ENCODE measurements at regions of chr20 and their contacts with region 1.

Region 1: GRCh38 chr20:24382743-24383142 is 86.7 kb upstream of the SYNDIG1 start:
- DNase-seq: peak in 4 of 10 donors; percentile 12 to 68 (median 44)
- H3K4me3 ChIP-seq: peak overlapping the region in 1 of 59 donors; percentile 9
- H3K27ac ChIP-seq: peak overlapping the region in 48 of 59 donors; percentile 2 to 83 (median 56)
- H3K27me3 ChIP-seq: peaks cover 0 to 4% (median 0%) of the 10 kb centered on the region in 45 donors
- CTCF ChIP-seq: no peak

Region 2: GRCh38 chr20:24309596-24309995 is 73.1 kb before region 1 on chr20:
- intact Hi-C with region 1: loop called in 1 of 2 experiments (anchors 5 kb)
- DNase-seq: no peak
- H3K4me3 ChIP-seq: no peak overlapping the region
- H3K27ac ChIP-seq: no peak overlapping the region
- H3K27me3 ChIP-seq: peaks cover 0 to 6% (median 0%) of the 10 kb centered on the region in 45 donors
- CTCF ChIP-seq: no peak

Region 3: DNA sequence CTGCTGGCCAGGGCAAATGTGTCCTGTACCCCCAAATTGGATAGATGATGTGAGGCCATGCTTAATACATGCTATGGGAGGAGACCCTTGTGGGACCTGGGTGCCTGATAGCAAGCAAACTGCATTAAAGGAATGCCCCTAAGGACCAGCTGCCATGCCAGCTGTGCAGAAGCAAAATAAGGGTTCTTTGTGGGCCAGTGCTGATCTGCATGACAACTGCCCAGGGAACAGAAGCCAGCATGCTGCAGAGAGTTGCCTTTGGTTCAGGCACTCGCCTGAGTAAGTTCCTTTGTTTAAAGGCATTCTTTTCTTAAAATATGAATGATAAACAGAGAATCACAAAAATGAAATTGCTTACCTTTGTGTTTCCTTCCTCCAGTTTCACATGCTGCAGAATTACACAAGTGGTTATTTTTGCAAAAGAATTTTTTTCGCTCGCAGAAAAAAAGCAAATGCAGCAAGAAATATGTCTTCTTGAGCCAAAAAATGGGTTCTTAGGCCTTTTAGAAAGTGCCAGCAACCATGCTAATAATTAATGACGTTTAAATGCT is 79.8 kb after region 1 on chr20:
- intact Hi-C with region 1: loop called in 1 of 2 experiments (anchors 5 kb)
- DNase-seq: peak in 9 of 10 donors; percentile 51 to 84 (median 74)
- H3K4me3 ChIP-seq: peak overlapping the region in 2 of 59 donors; percentile 15 to 21
- H3K27ac ChIP-seq: peak overlapping the region; percentile 70 to 99 (median 91)
- H3K27me3 ChIP-seq: peaks cover 0 to 4% (median 0%) of the 10 kb centered on the region in 45 donors
- CTCF ChIP-seq: peak in 5 of 56 donors; percentile 11 to 28 (median 12)

Region 4: DNA sequence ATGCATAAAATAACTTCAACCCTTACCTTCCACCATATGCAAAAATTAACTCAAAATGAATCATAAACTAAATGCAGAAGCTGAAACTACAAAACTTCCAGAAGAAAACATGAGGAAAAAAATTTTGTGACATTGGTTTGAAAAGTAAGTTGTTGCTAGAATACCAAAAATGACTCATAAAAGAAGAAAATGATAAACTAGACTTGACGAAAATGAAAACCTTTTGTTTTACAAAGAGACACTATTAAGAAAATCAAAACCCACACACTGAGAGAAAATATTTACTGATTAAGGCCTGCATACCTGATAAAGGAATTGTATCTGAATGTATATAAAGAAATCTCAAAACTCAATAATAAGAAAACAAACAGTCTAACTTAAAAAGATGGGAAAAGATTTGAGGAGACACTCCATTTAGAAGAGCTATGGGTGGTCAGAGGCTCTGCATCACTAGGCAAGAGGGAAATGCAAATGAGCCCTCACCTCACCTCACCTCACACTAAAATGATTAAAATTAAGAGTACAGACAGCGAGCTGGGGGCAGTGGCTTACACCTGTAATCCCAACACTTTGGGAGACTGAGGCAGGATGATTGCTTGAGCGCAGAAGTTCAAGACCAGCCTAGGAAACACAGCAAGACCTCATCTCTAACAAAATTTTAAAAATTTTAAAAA is 468.7 kb after region 1 on chr20:
- intact Hi-C with region 1: no loop called
- DNase-seq: no peak
- H3K4me3 ChIP-seq: no peak overlapping the region
- H3K27ac ChIP-seq: no peak overlapping the region
- H3K27me3 ChIP-seq: peaks cover 0 to 10% (median 0%) of the 10 kb centered on the region in 45 donors
- CTCF ChIP-seq: no peak